Thyroid gland (tissue), 4 donors: ENCODE measurements at regions of chr9 and their contacts with region 1.

Region 1: DNA sequence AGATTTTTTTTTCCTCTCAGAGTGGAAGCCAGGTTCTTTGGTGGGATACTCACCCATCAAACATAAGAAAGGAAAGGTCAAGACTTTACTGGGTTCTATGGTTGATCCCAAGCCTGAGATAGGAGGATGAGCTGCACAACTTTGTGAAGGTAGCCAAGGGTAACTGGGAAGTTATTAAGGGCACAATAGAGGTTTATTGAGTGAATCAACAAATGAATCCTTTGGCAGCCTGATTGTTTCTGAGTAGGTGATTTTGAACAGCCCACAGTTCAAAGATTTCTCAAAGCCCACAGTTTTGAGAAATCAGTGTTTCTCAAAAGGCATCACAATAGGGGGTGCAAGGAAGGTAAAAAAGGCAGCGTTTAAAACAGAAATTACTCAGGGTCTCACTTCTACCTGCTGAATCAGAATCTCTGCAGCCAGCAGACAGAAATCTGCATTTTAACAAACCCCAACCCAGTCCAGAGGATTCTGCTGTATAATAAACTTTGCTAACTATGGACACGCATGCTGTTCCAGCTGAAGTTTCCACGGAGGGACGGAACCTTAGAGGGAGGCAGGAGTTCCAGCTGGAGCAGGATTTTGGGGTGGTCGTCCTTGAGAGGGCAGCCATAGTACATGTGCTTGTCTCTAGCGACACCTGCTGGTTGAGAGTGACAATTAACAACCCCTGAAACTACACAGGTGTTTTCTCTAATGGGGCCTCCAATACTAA is 32.7 kb upstream of the FSD1L start:
- DNase-seq: peak; percentile 59 to 60
- H3K4me3 ChIP-seq: no peak overlapping the region
- H3K27ac ChIP-seq: no peak overlapping the region
- H3K4me1 ChIP-seq: peaks cover 0 to 5% of the 10 kb centered on the region in 2 donors
- H3K27me3 ChIP-seq: no peaks in the 10 kb centered on the region
- CTCF ChIP-seq: peak; percentile 58 to 93 (median 84)
- POLR2A ChIP-seq: no peak

Region 2: GRCh38 chr9:105157130-105157583 is 257.9 kb before region 1 on chr9:
- intact Hi-C with region 1: loop called (anchors 10 kb)
- DNase-seq: peak; percentile 18 to 41
- H3K4me3 ChIP-seq: no peak overlapping the region
- H3K27ac ChIP-seq: no peak overlapping the region
- H3K4me1 ChIP-seq: no peaks in the 10 kb centered on the region
- H3K27me3 ChIP-seq: no peaks in the 10 kb centered on the region
- CTCF ChIP-seq: peak in 4 of 6 experiments; percentile 45 to 62 (median 53)
- POLR2A ChIP-seq: no peak

Region 3: GRCh38 chr9:105244003-105244733 is 170.9 kb before region 1 on chr9 and contains the start of gene SLC44A1:
- intact Hi-C with region 1: loop called (anchors 10 kb)
- DNase-seq: peak; percentile 98 to 99
- H3K4me3 ChIP-seq: peak within 1 kb of the TSS; percentile 37 to 64 (median 62)
- H3K27ac ChIP-seq: peak within 1 kb of the TSS; percentile 88 to 96 (median 89)
- H3K4me1 ChIP-seq: peaks cover 33 to 34% of the 10 kb centered on the region in 2 donors
- H3K27me3 ChIP-seq: no peaks in the 10 kb centered on the region
- CTCF ChIP-seq: peak in 1 of 6 experiments; percentile 3
- POLR2A ChIP-seq: peak; percentile 83 to 93
- total RNA-seq, gene SLC44A1: 102 to 144 (median 132) TPM

Region 4: GRCh38 chr9:105355781-105356180 is 59.3 kb before region 1 on chr9:
- intact Hi-C with region 1: no loop called
- DNase-seq: no peak
- H3K4me3 ChIP-seq: no peak overlapping the region
- H3K27ac ChIP-seq: no peak overlapping the region
- H3K4me1 ChIP-seq: peaks cover 0 to 3% of the 10 kb centered on the region in 2 donors
- H3K27me3 ChIP-seq: no peaks in the 10 kb centered on the region
- CTCF ChIP-seq: no peak
- POLR2A ChIP-seq: no peak